ENCODE measurements at regions of chr17 and their contacts with region 1.

Region 1: GRCh38 chr17:44733753-44734152 is 25.0 kb upstream of the ADAM11 start:
- DNase-seq: peak; percentile 45 to 57
- ATAC-seq: peak; percentile 88 to 91; a peak in 5 of 6 replicates
- H3K4me3 ChIP-seq: no peak overlapping the region
- H3K27ac ChIP-seq: no peak overlapping the region
- H3K4me1 ChIP-seq: no peaks in the 10 kb centered on the region
- CTCF ChIP-seq: peak; percentile 31
- EP300 ChIP-seq: no peak
- POLR2A ChIP-seq: no peak
- RAD21 ChIP-seq: peak; percentile 26 to 58; a peak in 2 of 5 replicates

Region 2: DNA sequence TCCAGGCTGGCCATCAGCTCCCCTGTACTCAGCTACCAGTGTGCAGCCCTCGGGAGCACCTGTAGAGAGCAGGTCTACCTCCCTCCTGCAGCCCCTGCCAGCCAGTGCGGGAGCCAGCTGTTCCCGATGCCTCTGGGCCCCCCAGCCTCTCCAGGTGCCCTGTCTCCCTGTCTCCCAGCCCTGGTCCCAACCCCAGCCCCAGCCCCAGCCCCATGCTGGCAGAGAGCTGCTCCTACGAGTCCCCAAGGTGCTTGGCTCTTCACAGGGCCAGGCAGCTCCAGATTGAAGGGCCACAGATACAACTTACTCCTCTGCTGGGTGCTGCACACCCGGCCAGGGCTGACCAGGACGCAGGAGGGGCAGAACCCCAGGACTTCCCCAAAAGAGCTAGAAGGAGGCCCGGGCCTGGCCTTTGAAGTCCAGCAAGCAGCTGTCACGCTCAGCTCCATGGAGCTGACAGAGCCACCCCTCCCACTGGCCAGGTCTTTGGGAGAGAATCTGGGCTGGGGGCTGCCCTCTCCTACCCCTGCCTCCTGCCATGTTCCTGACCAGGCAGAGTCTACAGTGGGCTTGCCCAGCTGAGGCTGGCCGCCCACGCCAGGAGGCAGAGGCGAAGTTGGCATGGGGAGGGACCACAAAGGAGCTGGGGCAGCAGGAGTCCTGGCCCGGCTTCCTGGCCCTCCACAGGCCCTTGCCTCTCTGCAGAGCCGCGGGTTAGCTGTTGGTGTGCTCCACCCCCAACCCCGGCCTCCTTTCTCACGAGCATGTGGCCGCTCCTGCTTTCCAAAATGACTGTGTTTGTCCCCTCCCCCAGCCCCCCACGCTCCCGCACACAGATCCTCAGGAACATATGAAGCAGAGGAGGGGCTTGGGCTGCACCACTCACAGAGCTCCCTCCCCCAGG is 15.6 kb after region 1 on chr17:
- CTCF ChIA-PET with region 1: interaction called, 17 read pairs
- POLR2A ChIA-PET with region 1: no interaction called
- DNase-seq: no peak
- ATAC-seq: peak in 1 of 2 experiments; percentile 14; a peak in 2 of 6 replicates
- H3K4me3 ChIP-seq: no peak overlapping the region
- H3K27ac ChIP-seq: no peak overlapping the region
- H3K4me1 ChIP-seq: no peaks in the 10 kb centered on the region
- CTCF ChIP-seq: no peak
- EP300 ChIP-seq: no peak
- POLR2A ChIP-seq: no peak
- RAD21 ChIP-seq: no peak

Region 3: DNA sequence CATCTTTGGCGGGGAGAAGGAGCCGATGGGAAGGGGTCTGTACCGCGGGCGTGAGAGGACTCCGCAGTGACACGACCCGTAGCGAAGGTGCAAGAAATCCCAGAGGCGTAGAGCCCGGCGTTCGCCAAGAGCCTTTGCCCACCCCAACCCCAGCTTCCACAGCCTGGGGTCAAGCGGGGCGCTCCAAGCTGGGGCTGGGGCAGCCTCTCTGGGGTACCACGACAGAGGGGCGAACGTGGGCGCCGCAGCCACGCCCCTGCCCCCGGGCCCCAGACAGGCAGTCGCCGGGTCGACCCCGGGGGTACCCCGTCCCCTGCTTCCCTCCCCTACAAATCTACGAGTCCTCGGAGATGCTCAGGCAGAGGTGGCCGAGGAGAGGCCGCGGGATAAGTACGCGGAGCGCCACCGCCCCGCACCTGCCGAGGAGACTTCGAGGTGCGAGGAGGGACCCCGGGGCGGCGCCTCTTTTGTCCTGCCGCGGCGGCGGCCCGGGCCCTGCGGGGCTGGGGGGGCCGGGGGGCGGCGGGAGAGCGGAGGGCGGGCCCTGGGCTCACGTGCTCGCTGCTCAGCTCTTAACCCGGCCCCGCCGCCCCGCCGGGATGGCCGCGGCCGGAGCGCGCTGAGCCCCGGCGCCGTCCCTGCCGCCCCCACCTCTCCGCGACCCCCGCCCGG is 24.8 kb after region 1 on chr17 and contains the start of gene ADAM11:
- CTCF ChIA-PET with region 1: interaction called, 12 read pairs
- POLR2A ChIA-PET with region 1: no interaction called
- DNase-seq: peak in 1 of 2 experiments; percentile 74
- ATAC-seq: peak; percentile 39 to 58
- H3K4me3 ChIP-seq: peak within 1 kb of the TSS; percentile 64
- H3K27ac ChIP-seq: peak within 1 kb of the TSS; percentile 62 to 89; a peak in 5 of 6 replicates
- H3K4me1 ChIP-seq: peaks cover 10% of the 10 kb centered on the region; the same call in 1 of the 3 replicates
- CTCF ChIP-seq: no peak
- EP300 ChIP-seq: no peak
- POLR2A ChIP-seq: no peak
- RAD21 ChIP-seq: no peak
- polyA plus RNA-seq, gene ADAM11: 0.75 and 0.79 TPM in 2 replicates

Region 4: DNA sequence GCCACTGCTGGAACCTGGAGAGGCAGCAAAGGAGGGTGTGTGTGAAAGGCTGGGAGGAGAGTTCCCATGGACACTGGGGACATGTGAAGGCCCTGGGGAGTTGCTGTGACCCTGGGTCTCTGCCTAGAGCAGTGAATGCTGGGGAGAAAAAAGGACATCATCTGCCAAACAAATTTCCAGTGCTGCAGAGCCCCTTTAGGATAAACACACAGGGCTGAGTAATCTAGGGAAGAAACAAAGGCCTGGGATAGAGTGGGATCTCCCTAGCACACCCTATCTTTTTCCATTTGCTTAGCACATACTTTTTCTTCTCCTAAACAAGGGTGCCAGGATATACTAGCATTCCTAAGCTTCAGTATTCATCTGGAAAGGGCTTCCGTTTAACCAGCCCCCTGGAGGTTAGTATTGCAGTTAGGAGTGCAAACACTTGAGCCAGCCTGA is 110.7 kb after region 1 on chr17:
- CTCF ChIA-PET with region 1: no interaction called
- POLR2A ChIA-PET with region 1: no interaction called
- DNase-seq: no peak
- ATAC-seq: peak; percentile 10 to 35; a peak in 4 of 6 replicates
- H3K4me3 ChIP-seq: no peak overlapping the region
- H3K27ac ChIP-seq: no peak overlapping the region
- H3K4me1 ChIP-seq: no peaks in the 10 kb centered on the region
- CTCF ChIP-seq: no peak
- EP300 ChIP-seq: no peak
- POLR2A ChIP-seq: no peak
- RAD21 ChIP-seq: no peak

Measured in A549 (cell line).